Heart right ventricle (tissue), 16 donors: ENCODE measurements at regions of chr5 and their contacts with region 1.

Region 1: GRCh38 chr5:147464211-147464610 is 45.7 kb downstream of the DPYSL3 start:
- DNase-seq: no peak
- ATAC-seq: peak in 2 of 8 donors; percentile 46 to 57
- H3K4me3 ChIP-seq: no peak overlapping the region
- H3K27ac ChIP-seq: no peak overlapping the region
- H3K4me1 ChIP-seq: peaks cover 0 to 49% (median 8%) of the 10 kb centered on the region in 9 donors
- H3K27me3 ChIP-seq: no peaks in the 10 kb centered on the region
- CTCF ChIP-seq: peak in 8 of 9 donors; percentile 35 to 62 (median 45)

Region 2: GRCh38 chr5:147439254-147439653 is 25.0 kb before region 1 on chr5:
- intact Hi-C with region 1: no loop called
- DNase-seq: no peak
- ATAC-seq: peak in 1 of 8 donors; percentile 64
- H3K4me3 ChIP-seq: no peak overlapping the region
- H3K27ac ChIP-seq: no peak overlapping the region
- H3K4me1 ChIP-seq: peaks cover 0 to 34% (median 16%) of the 10 kb centered on the region in 9 donors
- H3K27me3 ChIP-seq: no peaks in the 10 kb centered on the region
- CTCF ChIP-seq: no peak

Region 3: DNA sequence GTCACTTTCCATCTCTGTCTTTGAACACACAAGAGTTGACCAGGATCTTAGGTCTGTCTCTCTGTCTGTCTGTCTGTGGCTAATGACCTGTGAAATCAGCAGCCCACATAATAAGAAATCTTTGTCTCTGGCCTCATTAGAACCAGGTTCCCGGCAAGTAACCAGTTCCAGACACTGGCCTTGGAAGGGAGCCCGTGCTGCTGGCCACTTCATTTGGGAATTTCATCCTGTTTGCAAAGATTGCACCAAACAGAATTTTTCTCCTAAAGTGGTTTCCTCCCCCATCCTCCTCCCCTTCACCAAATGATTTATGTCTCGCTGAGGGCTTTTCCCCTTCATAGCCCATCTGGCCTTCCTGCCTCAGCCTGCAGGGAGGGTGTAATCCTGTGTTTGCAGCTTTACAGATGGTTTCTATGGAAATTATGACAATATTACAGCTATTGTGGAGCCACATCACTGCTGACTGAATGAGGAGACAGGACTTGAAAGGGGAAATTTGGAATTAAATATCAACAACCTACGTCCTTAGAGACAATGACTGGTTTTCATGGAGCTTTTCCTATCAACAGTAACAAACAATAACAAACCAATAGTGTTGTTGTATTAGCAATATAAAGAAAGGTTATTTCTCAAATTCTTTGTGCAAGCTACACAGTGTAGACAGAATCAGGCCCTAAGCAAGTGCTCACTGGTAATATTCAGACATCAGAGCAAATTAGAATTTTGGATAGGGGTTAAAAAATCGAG is 19.9 kb after region 1 on chr5:
- intact Hi-C with region 1: no loop called
- DNase-seq: peak; percentile 54 to 74
- ATAC-seq: peak; percentile 78 to 92 (median 87)
- H3K4me3 ChIP-seq: no peak overlapping the region
- H3K27ac ChIP-seq: peak overlapping the region; percentile 62 to 93 (median 72)
- H3K4me1 ChIP-seq: peaks cover 9 to 86% (median 64%) of the 10 kb centered on the region in 9 donors
- H3K27me3 ChIP-seq: peaks cover 0 to 5% (median 0%) of the 10 kb centered on the region in 7 donors
- CTCF ChIP-seq: no peak

Region 4: GRCh38 chr5:147504011-147504410 is 39.8 kb after region 1 on chr5:
- intact Hi-C with region 1: loop called in 4 of 10 experiments (anchors 5 kb)
- DNase-seq: peak in 1 of 2 donors; percentile 59
- ATAC-seq: peak in 7 of 8 donors; percentile 40 to 80 (median 61)
- H3K4me3 ChIP-seq: no peak overlapping the region
- H3K27ac ChIP-seq: peak overlapping the region in 9 of 10 donors; percentile 31 to 96 (median 62)
- H3K4me1 ChIP-seq: peaks cover 0 to 38% (median 18%) of the 10 kb centered on the region in 9 donors
- H3K27me3 ChIP-seq: peaks cover 0 to 8% (median 0%) of the 10 kb centered on the region in 7 donors
- CTCF ChIP-seq: no peak

Region 5: DNA sequence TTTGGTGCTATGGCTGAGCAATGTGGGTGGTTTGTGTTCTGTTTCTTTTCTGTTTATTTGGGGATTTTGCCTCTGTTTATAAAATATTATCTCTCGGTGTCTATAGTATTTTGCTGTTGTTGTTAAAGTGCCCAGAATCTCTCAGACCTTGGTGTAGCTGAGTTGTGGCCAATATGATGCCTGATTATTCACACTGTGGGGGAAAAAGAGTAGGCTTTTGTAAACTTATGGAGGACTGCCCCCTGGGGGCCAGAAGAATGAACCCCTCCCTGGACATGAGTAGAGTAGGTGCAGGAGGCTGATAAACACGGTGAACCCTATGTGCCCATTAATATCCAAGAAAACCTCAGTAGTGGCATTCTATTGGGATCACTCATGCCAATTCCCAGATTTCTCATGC is 94.6 kb after region 1 on chr5:
- intact Hi-C with region 1: loop called in 3 of 10 experiments (anchors 5 to 10 kb)
- DNase-seq: peak; percentile 35 to 58
- ATAC-seq: peak in 7 of 8 donors; percentile 73 to 88 (median 81)
- H3K4me3 ChIP-seq: no peak overlapping the region
- H3K27ac ChIP-seq: peak overlapping the region in 2 of 10 donors; percentile 26 to 38
- H3K4me1 ChIP-seq: peaks cover 0 to 31% (median 14%) of the 10 kb centered on the region in 9 donors
- H3K27me3 ChIP-seq: no peaks in the 10 kb centered on the region
- CTCF ChIP-seq: peak; percentile 37 to 77 (median 66)